ENCODE measurements at regions of chr14 and their contacts with region 1.

Region 1: DNA sequence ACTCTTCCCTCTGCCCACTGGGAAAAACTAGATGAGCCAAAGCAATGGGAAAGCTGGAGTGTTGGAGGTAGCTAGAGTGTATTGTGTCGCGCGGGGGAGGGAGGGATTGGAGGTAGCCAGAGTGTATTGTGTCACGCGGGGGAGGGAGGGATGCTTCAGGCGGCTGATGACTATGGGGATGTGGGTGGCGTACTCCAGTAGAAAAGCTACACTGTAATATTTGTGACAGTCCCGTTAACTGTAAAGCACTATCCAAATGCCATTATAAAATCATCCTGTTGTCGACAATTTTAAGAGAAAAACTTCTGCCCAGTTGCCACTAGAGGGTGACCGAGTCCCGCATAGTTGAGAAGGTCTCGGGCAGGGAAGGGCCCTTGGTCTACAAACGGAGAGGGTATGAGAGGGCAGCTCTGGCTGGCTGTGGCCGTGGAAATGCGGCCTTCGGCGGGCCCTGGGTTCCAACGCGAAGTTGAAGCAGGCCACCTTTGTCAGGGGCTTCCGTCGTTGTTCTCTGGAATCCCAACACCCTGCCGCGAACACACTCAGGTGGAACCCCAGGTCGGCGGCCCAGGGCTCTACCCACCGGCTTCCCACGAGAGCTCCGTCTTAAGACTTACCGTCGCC is 15.1 kb upstream of the PLEK2 start:
- DNase-seq: peak; percentile 81 to 84
- H3K4me3 ChIP-seq: no peak overlapping the region
- H3K4me1 ChIP-seq: no peaks in the 10 kb centered on the region; the same call in 1 of the 2 replicates
- H3K27me3 ChIP-seq: no peaks in the 10 kb centered on the region; the same call in 1 of the 2 replicates

Region 2: GRCh38 chr14:66459603-66460002 is 967.5 kb before region 1 on chr14:
- in situ Hi-C with region 1: no loop called
- DNase-seq: no peak
- H3K4me3 ChIP-seq: no peak overlapping the region
- H3K4me1 ChIP-seq: no peaks in the 10 kb centered on the region
- H3K27me3 ChIP-seq: no peaks in the 10 kb centered on the region

Region 3: GRCh38 chr14:67151131-67151569 is 275.9 kb before region 1 on chr14:
- in situ Hi-C with region 1: no loop called
- DNase-seq: no peak
- H3K4me3 ChIP-seq: no peak overlapping the region
- H3K4me1 ChIP-seq: no peaks in the 10 kb centered on the region; the same call in 1 of the 2 replicates
- H3K27me3 ChIP-seq: no peaks in the 10 kb centered on the region

Region 4: DNA sequence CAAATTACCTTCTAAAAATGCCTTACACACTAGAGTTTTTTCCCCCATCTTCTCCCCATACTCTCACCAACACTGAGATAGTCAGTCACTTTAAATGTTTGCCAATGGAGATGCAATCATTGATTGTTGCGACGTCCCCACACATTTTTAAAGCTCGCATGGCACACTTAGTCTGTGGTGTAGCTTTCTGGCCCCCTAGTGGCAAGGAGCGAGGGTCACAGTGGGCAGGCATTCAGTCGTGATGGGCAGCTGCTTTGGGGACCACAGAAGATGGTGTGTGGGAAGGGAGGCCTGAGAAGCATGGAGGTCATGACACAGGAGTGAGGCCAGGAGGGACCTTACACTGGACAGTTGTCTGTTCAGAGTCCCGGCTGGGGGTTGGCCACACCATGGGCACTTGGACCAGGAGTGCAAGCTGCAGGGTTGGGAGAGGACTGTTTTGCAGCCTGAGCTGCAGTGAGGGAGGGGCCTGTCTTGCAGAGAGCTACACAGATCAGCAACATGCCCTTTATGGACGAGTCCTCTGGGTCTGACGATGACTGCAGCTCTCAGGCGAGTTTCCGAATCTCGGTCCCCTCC is 144.3 kb after region 1 on chr14:
- in situ Hi-C with region 1: loop called (anchors 10 kb)
- DNase-seq: peak; percentile 44 to 79
- H3K4me3 ChIP-seq: no peak overlapping the region
- H3K4me1 ChIP-seq: peaks cover 10% of the 10 kb centered on the region
- H3K27me3 ChIP-seq: no peaks in the 10 kb centered on the region

Region 5: DNA sequence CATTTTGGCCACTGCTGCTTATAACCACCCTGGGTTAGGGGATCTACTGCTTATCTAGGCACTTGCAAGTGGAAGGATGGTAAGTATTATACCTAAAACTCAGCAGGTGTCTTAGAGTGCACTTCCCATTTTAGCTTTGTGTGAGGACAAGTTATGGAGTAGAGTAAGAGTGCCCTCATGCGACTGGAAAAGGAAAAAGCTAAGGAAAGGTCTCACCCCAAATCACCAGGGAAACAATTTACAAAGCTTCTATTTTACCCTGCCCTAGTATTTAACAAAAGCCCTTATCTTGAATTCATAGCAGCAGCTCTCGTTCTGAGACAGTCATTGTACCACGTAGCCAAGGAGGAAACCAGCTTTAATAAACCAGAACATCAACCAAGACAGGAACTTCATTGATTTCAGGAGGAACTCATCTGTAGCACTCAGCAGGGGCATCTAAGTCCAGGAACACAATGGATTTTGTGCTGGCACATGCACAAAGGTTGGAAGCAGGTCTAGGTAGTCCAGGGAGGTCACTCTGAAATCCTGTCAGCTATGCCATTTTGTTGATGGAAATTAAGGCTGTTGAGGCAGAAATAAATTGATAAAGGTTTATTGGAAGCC is 277.5 kb after region 1 on chr14:
- in situ Hi-C with region 1: loop called (anchors 10 kb)
- DNase-seq: peak; percentile 51 to 75
- H3K4me3 ChIP-seq: no peak overlapping the region
- H3K4me1 ChIP-seq: no peaks in the 10 kb centered on the region
- H3K27me3 ChIP-seq: no peaks in the 10 kb centered on the region